ENCODE measurements at regions of chr11 and their contacts with region 1.

Region 1: DNA sequence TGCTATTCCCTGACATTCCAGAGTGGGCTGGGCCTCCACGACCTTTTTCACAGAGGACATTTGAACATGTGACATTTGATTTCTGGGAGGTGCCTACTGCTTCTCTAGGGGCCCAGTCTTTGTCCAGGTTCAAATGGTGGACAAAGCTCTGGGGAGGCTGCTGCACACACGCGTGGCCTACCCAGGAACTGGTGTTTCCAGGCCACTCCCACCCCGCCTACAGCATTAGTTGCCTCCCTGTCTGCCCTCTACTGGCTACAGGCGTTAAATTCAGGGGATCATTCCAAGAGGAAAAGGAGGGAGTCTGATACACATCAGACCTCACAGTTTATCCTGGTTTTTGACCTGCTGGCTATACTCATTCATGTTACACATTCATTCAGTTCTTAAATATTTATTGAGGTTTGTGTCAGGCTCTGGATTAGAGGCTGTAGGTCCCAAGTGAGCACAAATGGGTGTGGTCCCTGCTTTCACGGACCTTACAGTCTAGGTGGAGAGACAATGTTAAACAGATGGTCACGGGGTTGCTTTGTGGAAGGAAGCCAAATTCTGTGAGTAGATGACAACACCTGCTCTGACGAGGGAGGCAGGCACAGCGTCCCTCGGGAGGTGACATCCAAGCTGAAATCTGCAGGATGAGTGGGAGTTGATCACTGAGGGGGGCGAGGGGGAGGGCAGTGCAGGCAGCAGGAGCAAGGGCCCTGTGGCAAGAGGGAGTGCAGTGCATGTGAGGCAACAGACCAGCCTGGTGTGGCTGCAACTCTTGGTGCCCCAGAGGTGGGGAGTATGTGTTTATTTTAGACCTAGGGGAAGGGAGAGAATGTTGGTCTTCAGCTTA is 11.8 kb downstream of the TUB start:
- DNase-seq: peak in 1 of 2 experiments; percentile 71
- H3K4me3 ChIP-seq: no peak overlapping the region
- H3K27ac ChIP-seq: no peak overlapping the region
- H3K4me1 ChIP-seq: peaks cover 0 to 2% (median under 1%) of the 10 kb centered on the region in 4 experiments; a peak in 1 of 7 replicates
- H3K27me3 ChIP-seq: no peaks in the 10 kb centered on the region; a peak in 2 of 7 replicates
- CTCF ChIP-seq: peak; percentile 72 to 86 (median 79)
- EP300 ChIP-seq: no peak
- POLR2A ChIP-seq: no peak
- RAD21 ChIP-seq: peak; percentile 49 to 63

Region 2: DNA sequence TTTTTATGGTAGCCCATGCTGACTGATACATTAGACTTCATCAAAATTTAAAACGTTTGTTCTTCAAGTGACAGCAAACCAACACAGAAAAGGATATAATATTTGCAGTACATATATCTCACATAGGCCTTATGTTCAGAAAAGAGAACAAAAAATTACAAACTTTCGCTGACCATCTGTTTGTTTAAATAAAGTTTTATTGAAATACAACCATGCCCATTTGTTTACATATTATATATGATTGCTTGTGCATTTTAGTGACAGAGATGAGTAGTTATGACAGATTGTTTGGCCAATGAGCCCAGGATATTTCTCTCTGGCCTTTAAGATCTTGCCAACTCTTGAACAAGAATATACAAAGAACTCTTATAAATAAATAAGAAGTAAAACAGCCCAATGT is 288.6 kb before region 1 on chr11:
- CTCF ChIA-PET with region 1: no interaction called
- POLR2A ChIA-PET with region 1: no interaction called
- DNase-seq: no peak
- H3K4me3 ChIP-seq: no peak overlapping the region
- H3K27ac ChIP-seq: no peak overlapping the region
- H3K4me1 ChIP-seq: no peaks in the 10 kb centered on the region
- H3K27me3 ChIP-seq: no peaks in the 10 kb centered on the region
- CTCF ChIP-seq: no peak
- EP300 ChIP-seq: no peak
- POLR2A ChIP-seq: no peak
- RAD21 ChIP-seq: no peak

Region 3: GRCh38 chr11:8018484-8019313 is 74.1 kb before region 1 on chr11:
- CTCF ChIA-PET with region 1: interaction called, 118 read pairs
- POLR2A ChIA-PET with region 1: interaction called, 3 read pairs
- DNase-seq: peak in 1 of 2 experiments; percentile 87
- H3K4me3 ChIP-seq: peak overlapping the region; percentile 56 to 68 (median 61)
- H3K27ac ChIP-seq: no peak overlapping the region
- H3K4me1 ChIP-seq: peaks cover 6 to 17% (median 13%) of the 10 kb centered on the region in 4 experiments; a peak in 6 of 7 replicates
- H3K27me3 ChIP-seq: peaks cover 14 to 59% (median 52%) of the 10 kb centered on the region in 4 experiments
- CTCF ChIP-seq: no peak
- EP300 ChIP-seq: peak in 1 of 2 experiments; percentile 67; a peak in 1 of 3 replicates
- POLR2A ChIP-seq: no peak; a peak in 1 of 3 replicates
- RAD21 ChIP-seq: no peak

Region 4: DNA sequence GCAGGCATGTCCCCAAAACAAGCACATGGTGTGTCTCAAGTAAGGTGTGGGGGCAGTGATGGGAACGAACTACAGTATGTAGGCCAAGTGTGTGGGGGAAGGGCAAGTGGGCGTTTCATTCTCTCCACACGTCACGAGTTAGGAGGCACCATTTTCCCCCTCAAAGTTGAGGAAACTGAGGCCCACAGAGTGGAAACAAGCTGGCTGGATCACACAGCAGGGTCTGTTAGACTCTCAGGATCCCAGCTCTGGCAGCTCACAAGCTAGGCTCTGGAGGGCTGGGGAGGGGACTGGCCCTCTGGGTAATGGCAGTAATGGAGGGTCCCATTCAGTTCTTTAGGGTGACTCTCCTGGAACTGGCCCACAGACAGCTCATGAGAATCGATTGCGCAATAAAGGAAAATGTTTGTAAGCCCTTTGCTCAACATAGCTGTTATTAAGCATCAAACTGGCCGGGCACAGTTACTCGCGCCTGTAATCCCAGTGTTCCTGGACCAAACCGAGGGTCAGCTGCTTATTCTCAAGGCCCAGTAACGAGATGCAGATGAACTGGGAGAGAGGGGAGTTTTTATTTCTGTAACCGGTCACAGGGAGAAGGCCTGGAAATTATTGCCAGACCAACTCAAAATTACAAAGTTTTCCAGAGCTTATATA is 35.9 kb before region 1 on chr11:
- CTCF ChIA-PET with region 1: interaction called, 1,283 read pairs
- POLR2A ChIA-PET with region 1: interaction called, 4 read pairs
- DNase-seq: peak in 1 of 2 experiments; percentile 36
- H3K4me3 ChIP-seq: no peak overlapping the region
- H3K27ac ChIP-seq: no peak overlapping the region
- H3K4me1 ChIP-seq: peaks cover 0 to 5% (median 0%) of the 10 kb centered on the region in 4 experiments; a peak in 2 of 7 replicates
- H3K27me3 ChIP-seq: no peaks in the 10 kb centered on the region
- CTCF ChIP-seq: no peak
- EP300 ChIP-seq: no peak
- POLR2A ChIP-seq: no peak
- RAD21 ChIP-seq: no peak

Region 5: GRCh38 chr11:8080674-8081590 is 11.9 kb before region 1 on chr11 and contains the start of gene TUB:
- CTCF ChIA-PET with region 1: interaction called, 225 read pairs
- POLR2A ChIA-PET with region 1: interaction called, 9 read pairs
- DNase-seq: peak in 1 of 2 experiments; percentile 77
- H3K4me3 ChIP-seq: peak within 1 kb of the TSS; percentile 41 to 73 (median 51)
- H3K27ac ChIP-seq: no peak within 1 kb of the TSS
- H3K4me1 ChIP-seq: peaks cover 10 to 46% (median 31%) of the 10 kb centered on the region in 4 experiments
- H3K27me3 ChIP-seq: peaks cover 0 to 18% (median 13%) of the 10 kb centered on the region in 4 experiments; a peak in 5 of 7 replicates
- CTCF ChIP-seq: no peak
- EP300 ChIP-seq: no peak
- POLR2A ChIP-seq: no peak
- RAD21 ChIP-seq: no peak
- total RNA-seq, gene TUB: 29.9 and 31.3 TPM in 2 replicates

Region 6: DNA sequence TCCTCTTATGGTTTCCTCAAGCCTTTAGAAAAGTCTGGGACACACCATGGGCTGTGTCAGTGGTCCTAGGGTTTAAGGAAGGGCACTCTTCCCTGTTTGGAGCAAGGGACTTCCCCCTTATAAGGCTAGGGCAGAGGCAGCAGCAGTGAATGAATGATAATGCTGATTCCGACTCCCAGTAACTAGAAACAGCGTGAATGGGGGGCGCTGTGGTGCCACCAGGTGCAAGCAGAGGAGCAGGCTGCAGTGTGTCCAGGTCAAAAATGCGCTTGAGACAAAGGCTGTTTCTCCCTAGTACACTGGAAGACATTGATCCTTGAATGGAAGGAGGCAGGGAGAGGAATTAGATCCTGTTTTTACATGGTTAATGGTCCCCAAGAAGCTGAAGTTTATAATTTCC is 87.7 kb after region 1 on chr11:
- CTCF ChIA-PET with region 1: interaction called, 11 read pairs
- POLR2A ChIA-PET with region 1: no interaction called
- DNase-seq: peak in 1 of 2 experiments; percentile 71
- H3K4me3 ChIP-seq: no peak overlapping the region
- H3K27ac ChIP-seq: no peak overlapping the region
- H3K4me1 ChIP-seq: no peaks in the 10 kb centered on the region
- H3K27me3 ChIP-seq: no peaks in the 10 kb centered on the region; a peak in 1 of 7 replicates
- CTCF ChIP-seq: peak; percentile 35 to 60 (median 54)
- EP300 ChIP-seq: no peak
- POLR2A ChIP-seq: no peak
- RAD21 ChIP-seq: peak in 1 of 2 experiments; percentile 36; a peak in 3 of 4 replicates